ENCODE measurements at regions of chr4 and their contacts with region 1.

Region 1: DNA sequence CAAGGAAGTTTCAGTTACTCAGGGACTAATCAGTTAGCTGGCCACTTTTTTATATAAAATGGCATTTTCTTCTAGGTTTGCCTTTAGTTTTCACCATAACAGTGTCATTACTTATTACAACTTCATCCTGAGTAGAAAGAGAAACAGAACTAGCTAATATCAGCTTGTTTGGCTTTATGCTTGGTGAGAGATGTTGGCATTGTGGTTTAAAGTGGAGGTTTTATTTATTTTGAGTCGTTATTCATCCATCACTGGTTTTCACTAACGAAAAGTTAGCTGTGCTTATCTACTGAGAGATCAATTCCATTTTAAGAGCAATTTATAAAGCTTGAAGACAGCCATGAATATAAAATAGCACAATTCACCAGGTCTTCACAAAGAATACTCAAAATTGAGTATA is 714.5 kb downstream of the GRID2 start:
- DNase-seq: no peak
- ATAC-seq: no peak
- H3K4me3 ChIP-seq: no peak overlapping the region
- H3K27ac ChIP-seq: no peak overlapping the region
- H3K4me1 ChIP-seq: no peaks in the 10 kb centered on the region
- H3K27me3 ChIP-seq: no peaks in the 10 kb centered on the region

Region 2: DNA sequence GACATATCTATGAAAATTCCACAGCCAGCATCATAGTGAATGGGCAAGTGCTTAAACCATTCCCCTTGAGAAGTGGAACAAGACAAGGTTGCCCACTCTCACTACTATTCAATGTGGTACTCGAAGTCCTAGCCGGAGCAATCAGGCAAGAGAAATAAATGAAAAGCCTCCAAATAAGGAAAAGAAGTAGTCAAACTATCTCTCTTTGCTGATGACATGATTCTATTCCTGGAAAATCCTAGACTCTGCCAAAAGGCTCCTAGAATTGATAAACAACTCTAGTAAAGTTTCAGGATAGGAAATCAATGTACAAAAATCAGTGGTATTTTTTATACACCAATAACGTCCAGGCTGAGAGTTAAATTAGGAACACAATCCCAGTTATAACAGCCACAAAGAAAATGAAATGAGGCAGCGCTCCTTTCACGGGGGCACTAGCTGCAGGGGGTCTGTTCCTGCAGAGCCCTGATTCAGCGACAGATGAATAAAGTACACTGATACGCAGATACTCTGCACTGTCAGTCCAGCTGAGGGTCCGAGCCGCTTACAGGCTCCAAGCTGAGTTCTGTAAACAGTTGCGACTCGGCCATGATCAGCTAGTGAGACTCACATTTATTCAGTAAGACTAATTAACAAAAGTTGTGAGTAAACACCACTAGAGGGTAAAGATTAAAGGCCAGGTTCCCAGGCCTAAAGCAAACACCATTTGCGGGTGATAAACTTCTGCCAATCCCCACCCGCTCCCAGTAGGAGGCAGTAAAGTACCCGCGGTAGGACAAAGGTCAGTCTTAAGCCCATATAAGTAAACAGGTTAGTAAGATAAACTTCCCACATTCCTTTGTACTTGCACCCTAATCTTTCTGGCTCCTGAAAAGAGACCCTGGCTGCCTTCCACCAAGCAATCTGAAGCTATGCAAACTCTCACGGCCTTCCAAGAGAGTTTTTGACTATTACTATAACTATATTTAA is 1005.1 kb before region 1 on chr4:
- intact Hi-C with region 1: no loop called
- DNase-seq: no peak
- ATAC-seq: no peak
- H3K4me3 ChIP-seq: no peak overlapping the region
- H3K27ac ChIP-seq: no peak overlapping the region
- H3K4me1 ChIP-seq: no peaks in the 10 kb centered on the region
- H3K27me3 ChIP-seq: peaks cover 0 to 2% of the 10 kb centered on the region in 2 donors

Region 3: GRCh38 chr4:92830771-92831170 is 187.5 kb before region 1 on chr4:
- intact Hi-C with region 1: no loop called
- DNase-seq: no peak
- ATAC-seq: no peak
- H3K4me3 ChIP-seq: no peak overlapping the region
- H3K27ac ChIP-seq: no peak overlapping the region
- H3K4me1 ChIP-seq: no peaks in the 10 kb centered on the region
- H3K27me3 ChIP-seq: no peaks in the 10 kb centered on the region

Region 4: DNA sequence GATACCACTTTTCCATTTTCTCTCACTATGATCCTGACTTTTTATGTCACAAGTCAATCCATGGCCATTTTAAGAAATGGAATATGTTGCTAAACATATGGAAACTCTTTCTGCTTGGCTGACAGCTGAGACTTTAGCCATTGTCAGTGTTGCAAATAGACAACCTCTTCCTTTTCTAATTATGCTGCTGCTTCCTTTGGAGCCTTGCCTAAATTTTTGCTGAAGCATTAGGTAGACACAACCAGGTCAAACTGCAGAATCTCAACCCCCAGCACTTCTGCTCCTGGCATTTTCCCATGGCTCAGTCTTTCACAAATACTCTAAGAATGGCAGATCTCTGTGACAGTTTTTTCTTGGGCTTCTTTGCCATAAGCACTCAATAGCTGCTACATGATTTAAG is 171.2 kb before region 1 on chr4:
- intact Hi-C with region 1: no loop called
- DNase-seq: no peak
- ATAC-seq: no peak
- H3K4me3 ChIP-seq: no peak overlapping the region
- H3K27ac ChIP-seq: no peak overlapping the region
- H3K4me1 ChIP-seq: no peaks in the 10 kb centered on the region
- H3K27me3 ChIP-seq: no peaks in the 10 kb centered on the region

Region 5: GRCh38 chr4:93053140-93053539 is 34.9 kb after region 1 on chr4:
- intact Hi-C with region 1: no loop called
- DNase-seq: no peak
- ATAC-seq: no peak
- H3K4me3 ChIP-seq: no peak overlapping the region
- H3K27ac ChIP-seq: no peak overlapping the region
- H3K4me1 ChIP-seq: no peaks in the 10 kb centered on the region
- H3K27me3 ChIP-seq: no peaks in the 10 kb centered on the region

Region 6: GRCh38 chr4:93451954-93452353 is 433.7 kb after region 1 on chr4:
- intact Hi-C with region 1: loop called in 1 of 2 experiments (anchors 10 kb)
- DNase-seq: no peak
- ATAC-seq: no peak
- H3K4me3 ChIP-seq: no peak overlapping the region
- H3K27ac ChIP-seq: no peak overlapping the region
- H3K4me1 ChIP-seq: no peaks in the 10 kb centered on the region
- H3K27me3 ChIP-seq: no peaks in the 10 kb centered on the region

Measured in aorta (tissue), 5 donors.